Vagina (tissue), 2 donors: ENCODE measurements at regions of chr6 and their contacts with region 1.

Region 1: GRCh38 chr6:144013486-144013909 is 5.4 kb upstream of the PLAGL1 start:
- DNase-seq: no peak
- H3K4me3 ChIP-seq: no peak overlapping the region
- H3K27ac ChIP-seq: no peak overlapping the region
- H3K4me1 ChIP-seq: no peaks in the 10 kb centered on the region
- H3K27me3 ChIP-seq: no peaks in the 10 kb centered on the region
- CTCF ChIP-seq: peak; percentile 74 to 82 (median 75)
- POLR2A ChIP-seq: no peak

Region 2: GRCh38 chr6:142913511-142914047 is 1099.9 kb before region 1 on chr6:
- intact Hi-C with region 1: no loop called
- DNase-seq: no peak
- H3K4me3 ChIP-seq: no peak overlapping the region
- H3K27ac ChIP-seq: no peak overlapping the region
- H3K4me1 ChIP-seq: no peaks in the 10 kb centered on the region
- H3K27me3 ChIP-seq: no peaks in the 10 kb centered on the region
- CTCF ChIP-seq: no peak
- POLR2A ChIP-seq: no peak

Region 3: DNA sequence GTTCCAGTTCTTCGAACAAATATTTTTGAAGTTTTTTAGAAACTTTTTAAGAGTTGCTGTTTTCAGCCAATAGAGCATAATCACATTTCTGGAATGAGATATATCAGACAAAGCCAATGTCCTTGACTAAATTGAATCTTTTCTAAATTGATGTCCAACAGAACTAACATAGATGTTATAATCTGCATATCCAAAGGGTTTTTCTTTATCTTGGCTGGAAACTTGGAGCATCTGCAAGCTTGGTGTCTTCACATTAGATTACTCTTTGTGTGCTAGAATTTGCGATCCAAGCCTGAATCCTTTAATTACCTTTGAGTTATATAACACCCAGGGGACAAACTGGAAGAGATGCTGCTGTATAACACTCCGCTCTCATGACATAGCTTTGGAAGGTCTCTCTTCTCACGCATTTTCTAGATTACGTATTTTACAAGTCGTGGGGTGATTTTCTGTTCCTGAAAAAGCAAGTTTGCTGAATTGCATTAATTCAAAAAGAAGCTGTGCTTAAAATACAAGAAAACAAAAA is 437.5 kb before region 1 on chr6:
- intact Hi-C with region 1: loop called (anchors 2 kb)
- DNase-seq: no peak
- H3K4me3 ChIP-seq: no peak overlapping the region
- H3K27ac ChIP-seq: no peak overlapping the region
- H3K4me1 ChIP-seq: no peaks in the 10 kb centered on the region
- H3K27me3 ChIP-seq: no peaks in the 10 kb centered on the region
- CTCF ChIP-seq: no peak
- POLR2A ChIP-seq: no peak

Region 4: DNA sequence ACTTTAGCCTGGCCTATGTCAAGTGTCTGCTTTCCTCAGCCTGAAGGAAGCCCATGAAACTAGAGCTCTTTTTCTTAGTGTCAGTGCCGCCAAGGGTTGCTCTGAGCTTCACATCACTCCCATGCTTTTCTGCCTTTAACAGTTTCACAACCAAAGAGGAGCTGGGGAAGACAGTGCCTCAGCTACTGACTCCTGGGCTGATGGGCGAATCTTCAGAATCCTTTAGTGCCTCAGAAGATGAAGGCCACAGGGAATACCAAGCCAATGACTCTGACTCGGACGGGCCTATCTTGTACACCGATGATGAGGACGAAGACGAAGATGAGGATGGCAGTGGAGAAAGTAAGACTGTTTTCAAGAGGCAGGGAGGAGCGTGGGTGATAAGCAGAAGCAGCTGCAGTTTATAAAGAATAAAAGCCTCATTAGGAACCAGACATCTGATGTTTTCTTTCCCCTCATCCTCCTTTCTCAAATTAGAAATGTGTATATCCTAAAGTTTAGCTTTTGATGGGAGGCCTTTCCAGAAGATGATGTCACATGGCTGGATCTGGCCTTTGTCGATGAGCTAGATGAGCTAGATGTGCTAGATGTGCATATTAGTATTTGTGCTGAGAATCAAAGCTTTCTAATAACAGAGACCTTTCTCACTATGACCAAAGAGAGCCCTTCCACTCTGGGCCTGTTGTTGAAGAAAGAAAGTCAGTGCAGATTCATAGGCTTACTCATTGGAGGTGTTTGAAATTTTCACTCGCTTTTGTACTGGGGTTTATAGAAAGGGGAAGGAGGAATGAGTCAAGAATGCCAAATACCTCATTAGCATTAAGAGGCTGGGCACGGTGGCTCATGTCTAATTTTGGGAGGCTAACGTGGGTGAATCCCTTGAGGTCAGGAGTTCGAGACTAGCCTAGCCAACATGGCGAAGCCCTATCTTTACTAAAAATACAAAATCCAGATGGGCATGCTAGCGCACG is 241.1 kb before region 1 on chr6:
- intact Hi-C with region 1: no loop called
- DNase-seq: no peak
- H3K4me3 ChIP-seq: no peak overlapping the region
- H3K27ac ChIP-seq: peak overlapping the region; percentile 65
- H3K4me1 ChIP-seq: peaks cover 40% of the 10 kb centered on the region
- H3K27me3 ChIP-seq: no peaks in the 10 kb centered on the region
- CTCF ChIP-seq: no peak
- POLR2A ChIP-seq: no peak

Region 5: DNA sequence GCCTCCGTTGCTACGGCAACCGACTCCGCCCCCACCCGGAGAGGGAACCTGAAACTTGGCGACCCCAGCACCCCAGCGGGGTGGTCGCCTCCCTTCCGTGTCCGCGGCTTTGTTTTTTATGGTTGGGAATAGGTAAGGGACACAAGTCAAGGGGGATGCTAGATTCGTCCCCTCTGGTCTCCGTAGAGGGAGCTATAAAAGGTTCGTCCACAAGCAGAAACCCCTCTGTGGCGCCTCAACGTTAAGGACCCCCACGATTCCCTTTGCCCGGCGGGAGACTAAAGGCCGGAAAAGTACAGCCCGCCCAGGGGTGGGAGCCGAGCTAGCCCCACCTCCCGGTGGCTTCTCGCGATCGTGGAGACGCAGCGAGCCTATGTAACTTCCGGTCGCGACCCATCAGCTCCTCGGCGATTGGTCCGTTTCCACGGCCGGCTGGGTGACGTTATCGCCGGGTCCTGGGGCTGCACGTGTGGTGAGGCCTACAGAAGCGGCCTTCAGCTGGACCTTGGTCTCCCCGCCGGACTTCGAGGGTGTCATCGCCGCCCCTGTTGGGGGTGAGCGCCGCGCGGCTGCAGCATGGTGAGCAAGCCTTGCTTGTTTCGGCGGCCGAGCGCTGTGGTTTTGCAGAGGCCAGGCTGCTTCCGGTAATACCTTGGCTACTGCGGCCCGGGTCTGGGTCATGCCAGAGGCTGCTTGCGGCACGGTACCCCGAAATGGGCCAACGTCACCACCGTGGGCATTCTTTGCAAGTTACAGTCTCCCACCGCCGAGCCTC is 170.4 kb before region 1 on chr6 and contains the start of gene LTV1:
- intact Hi-C with region 1: loop called (anchors 10 kb)
- DNase-seq: peak; percentile 97 to 98
- H3K4me3 ChIP-seq: peak within 1 kb of the TSS; percentile 78 to 89
- H3K27ac ChIP-seq: peak within 1 kb of the TSS; percentile 97
- H3K4me1 ChIP-seq: peaks cover 26% of the 10 kb centered on the region
- H3K27me3 ChIP-seq: no peaks in the 10 kb centered on the region
- CTCF ChIP-seq: no peak
- POLR2A ChIP-seq: peak in 1 of 2 donors; percentile 70
- total RNA-seq, gene LTV1: 23.3 TPM